CD4-positive, alpha-beta memory T cell (primary cell): ENCODE measurements at regions of chr18 and their contacts with region 1.

Region 1: GRCh38 chr18:48913201-48913600 is 37.6 kb downstream of the SMAD7 start:
- DNase-seq: peak; percentile 56 to 68 (median 62)
- H3K4me3 ChIP-seq: no peak overlapping the region
- H3K4me3 Mint-ChIP-seq: no peak overlapping the region
- H3K27ac ChIP-seq: no peak overlapping the region
- H3K27ac Mint-ChIP-seq: peak overlapping the region in 3 of 7 donors; percentile 73 to 89 (median 81)
- H3K4me1 ChIP-seq: peaks cover 14% of the 10 kb centered on the region
- H3K4me1 Mint-ChIP-seq: peaks cover 16 to 48% (median 24%) of the 10 kb centered on the region in 4 donors
- H3K27me3 ChIP-seq: no peaks in the 10 kb centered on the region
- H3K27me3 Mint-ChIP-seq: peaks cover 0 to 1% of the 10 kb centered on the region in 2 donors

Region 2: GRCh38 chr18:48711651-48712486 is 201.3 kb before region 1 on chr18:
- CTCF ChIA-PET with region 1: interaction called, 4 read pairs
- POLR2A ChIA-PET with region 1: no interaction called
- intact Hi-C with region 1: loop called (anchors 1 kb)
- DNase-seq: peak in 3 of 5 donors; percentile 7 to 11 (median 11)
- H3K4me3 ChIP-seq: no peak overlapping the region
- H3K4me3 Mint-ChIP-seq: no peak overlapping the region
- H3K27ac ChIP-seq: no peak overlapping the region
- H3K27ac Mint-ChIP-seq: no peak overlapping the region
- H3K4me1 ChIP-seq: no peaks in the 10 kb centered on the region
- H3K4me1 Mint-ChIP-seq: no peaks in the 10 kb centered on the region
- H3K27me3 ChIP-seq: no peaks in the 10 kb centered on the region
- H3K27me3 Mint-ChIP-seq: no peaks in the 10 kb centered on the region

Region 3: GRCh38 chr18:48842259-48843061 is 70.7 kb before region 1 on chr18:
- CTCF ChIA-PET with region 1: interaction called, 24 read pairs
- POLR2A ChIA-PET with region 1: interaction called, 4 read pairs
- intact Hi-C with region 1: no loop called
- DNase-seq: peak; percentile 77 to 83 (median 78)
- H3K4me3 ChIP-seq: peak overlapping the region in 1 of 2 donors; percentile 34
- H3K4me3 Mint-ChIP-seq: peak overlapping the region; percentile 43 to 87 (median 74)
- H3K27ac ChIP-seq: peak overlapping the region; percentile 62
- H3K27ac Mint-ChIP-seq: peak overlapping the region; percentile 94 to 99 (median 97)
- H3K4me1 ChIP-seq: peaks cover 85% of the 10 kb centered on the region
- H3K4me1 Mint-ChIP-seq: peaks cover 68 to 84% (median 77%) of the 10 kb centered on the region in 4 donors
- H3K27me3 ChIP-seq: no peaks in the 10 kb centered on the region
- H3K27me3 Mint-ChIP-seq: no peaks in the 10 kb centered on the region

Region 4: DNA sequence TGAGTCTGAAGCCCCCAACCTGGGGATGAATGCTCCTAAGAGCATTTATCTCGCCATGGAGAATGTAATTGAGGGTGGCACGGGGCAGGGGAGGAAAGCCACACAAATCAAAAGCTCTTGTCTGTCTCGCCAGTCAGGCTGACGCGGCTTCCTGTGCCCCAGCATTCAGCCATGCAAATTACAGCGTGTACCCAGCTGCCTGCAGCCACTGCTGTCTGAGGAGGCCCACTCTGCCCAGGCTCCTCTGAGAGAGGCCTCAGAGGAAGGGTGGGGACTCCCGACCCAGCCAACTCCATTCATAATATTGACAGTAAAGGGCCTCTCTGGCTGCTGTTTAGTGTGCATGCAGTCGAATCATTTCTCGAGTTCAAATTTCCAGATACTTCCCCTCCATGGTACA is 15.6 kb after region 1 on chr18:
- CTCF ChIA-PET with region 1: interaction called, 15 read pairs
- POLR2A ChIA-PET with region 1: interaction called, 10 read pairs
- intact Hi-C with region 1: no loop called
- DNase-seq: peak; percentile 72 to 89 (median 76)
- H3K4me3 ChIP-seq: peak overlapping the region; percentile 13 to 15
- H3K4me3 Mint-ChIP-seq: peak overlapping the region; percentile 50 to 94 (median 74)
- H3K27ac ChIP-seq: peak overlapping the region; percentile 3
- H3K27ac Mint-ChIP-seq: peak overlapping the region; percentile 86 to 97 (median 95)
- H3K4me1 ChIP-seq: peaks cover 97% of the 10 kb centered on the region
- H3K4me1 Mint-ChIP-seq: peaks cover 66 to 99% (median 84%) of the 10 kb centered on the region in 4 donors
- H3K27me3 ChIP-seq: no peaks in the 10 kb centered on the region
- H3K27me3 Mint-ChIP-seq: peaks cover 0 to 1% of the 10 kb centered on the region in 2 donors

Region 5: GRCh38 chr18:49041435-49042245 is 128.4 kb after region 1 on chr18:
- CTCF ChIA-PET with region 1: interaction called, 21 read pairs
- POLR2A ChIA-PET with region 1: no interaction called
- intact Hi-C with region 1: loop called (anchors 10 kb)
- DNase-seq: peak in 4 of 5 donors; percentile 34 to 52 (median 42)
- H3K4me3 ChIP-seq: no peak overlapping the region
- H3K4me3 Mint-ChIP-seq: no peak overlapping the region
- H3K27ac ChIP-seq: no peak overlapping the region
- H3K27ac Mint-ChIP-seq: peak overlapping the region in 1 of 7 donors; percentile 8
- H3K4me1 ChIP-seq: no peaks in the 10 kb centered on the region
- H3K4me1 Mint-ChIP-seq: peaks cover 0 to 6% (median 0%) of the 10 kb centered on the region in 4 donors
- H3K27me3 ChIP-seq: no peaks in the 10 kb centered on the region
- H3K27me3 Mint-ChIP-seq: no peaks in the 10 kb centered on the region